ENCODE measurements at regions of chr10 and their contacts with region 1.

Region 1: GRCh38 chr10:52313933-52314816 is at the start of gene DKK1:
- DNase-seq: peak; percentile 25 to 55
- ATAC-seq: peak; percentile 35 to 90 (median 84)
- H3K4me3 ChIP-seq: peak within 1 kb of the TSS; percentile 27 to 62 (median 54)
- H3K27ac ChIP-seq: no peak within 1 kb of the TSS
- H3K4me1 ChIP-seq: peaks cover 0 to 20% (median 17%) of the 10 kb centered on the region in 9 donors
- H3K27me3 ChIP-seq: peaks cover 0 to 66% (median 29%) of the 10 kb centered on the region in 7 donors
- CTCF ChIP-seq: peak; percentile 31 to 65 (median 61)
- total RNA-seq, gene DKK1: 0.26 to 1.2 (median 0.47) TPM in 5 of 10 donors, not detected in the others

Region 2: GRCh38 chr10:52479567-52479966 is 165.4 kb after region 1 on chr10:
- intact Hi-C with region 1: loop called in 1 of 10 experiments (anchors 5 kb)
- DNase-seq: no peak
- ATAC-seq: no peak
- H3K4me3 ChIP-seq: no peak overlapping the region
- H3K27ac ChIP-seq: no peak overlapping the region
- H3K4me1 ChIP-seq: no peaks in the 10 kb centered on the region
- H3K27me3 ChIP-seq: no peaks in the 10 kb centered on the region
- CTCF ChIP-seq: no peak

Region 3: GRCh38 chr10:52652431-52653262 is 338.5 kb after region 1 on chr10:
- intact Hi-C with region 1: loop called in 2 of 10 experiments (anchors 5 kb)
- DNase-seq: no peak
- ATAC-seq: peak in 7 of 8 donors; percentile 30 to 80 (median 64)
- H3K4me3 ChIP-seq: no peak overlapping the region
- H3K27ac ChIP-seq: peak overlapping the region in 8 of 10 donors; percentile 1 to 64 (median 28)
- H3K4me1 ChIP-seq: peaks cover 0 to 15% (median 0%) of the 10 kb centered on the region in 9 donors
- H3K27me3 ChIP-seq: no peaks in the 10 kb centered on the region
- CTCF ChIP-seq: no peak